Activated naive CD4-positive, alpha-beta T cell treated with anti-CD3 and anti-CD28 coated beads for 36 hours (primary cell): ENCODE measurements at regions of chr14 and their contacts with region 1.

Region 1: GRCh38 chr14:91872517-91873470 is 5.5 kb upstream of the TC2N start:
- DNase-seq: peak; percentile 53
- H3K4me3 Mint-ChIP-seq: peak overlapping the region; percentile 57
- H3K27ac Mint-ChIP-seq: peak overlapping the region; percentile 74
- H3K4me1 Mint-ChIP-seq: peaks cover 87% of the 10 kb centered on the region
- H3K27me3 Mint-ChIP-seq: no peaks in the 10 kb centered on the region

Region 2: GRCh38 chr14:91303091-91303923 is 569.5 kb before region 1 on chr14:
- CTCF ChIA-PET with region 1: no interaction called
- intact Hi-C with region 1: loop called (anchors 5 kb)
- DNase-seq: peak; percentile 89
- H3K4me3 Mint-ChIP-seq: no peak overlapping the region
- H3K27ac Mint-ChIP-seq: peak overlapping the region; percentile 93
- H3K4me1 Mint-ChIP-seq: peaks cover 58% of the 10 kb centered on the region
- H3K27me3 Mint-ChIP-seq: no peaks in the 10 kb centered on the region

Region 3: DNA sequence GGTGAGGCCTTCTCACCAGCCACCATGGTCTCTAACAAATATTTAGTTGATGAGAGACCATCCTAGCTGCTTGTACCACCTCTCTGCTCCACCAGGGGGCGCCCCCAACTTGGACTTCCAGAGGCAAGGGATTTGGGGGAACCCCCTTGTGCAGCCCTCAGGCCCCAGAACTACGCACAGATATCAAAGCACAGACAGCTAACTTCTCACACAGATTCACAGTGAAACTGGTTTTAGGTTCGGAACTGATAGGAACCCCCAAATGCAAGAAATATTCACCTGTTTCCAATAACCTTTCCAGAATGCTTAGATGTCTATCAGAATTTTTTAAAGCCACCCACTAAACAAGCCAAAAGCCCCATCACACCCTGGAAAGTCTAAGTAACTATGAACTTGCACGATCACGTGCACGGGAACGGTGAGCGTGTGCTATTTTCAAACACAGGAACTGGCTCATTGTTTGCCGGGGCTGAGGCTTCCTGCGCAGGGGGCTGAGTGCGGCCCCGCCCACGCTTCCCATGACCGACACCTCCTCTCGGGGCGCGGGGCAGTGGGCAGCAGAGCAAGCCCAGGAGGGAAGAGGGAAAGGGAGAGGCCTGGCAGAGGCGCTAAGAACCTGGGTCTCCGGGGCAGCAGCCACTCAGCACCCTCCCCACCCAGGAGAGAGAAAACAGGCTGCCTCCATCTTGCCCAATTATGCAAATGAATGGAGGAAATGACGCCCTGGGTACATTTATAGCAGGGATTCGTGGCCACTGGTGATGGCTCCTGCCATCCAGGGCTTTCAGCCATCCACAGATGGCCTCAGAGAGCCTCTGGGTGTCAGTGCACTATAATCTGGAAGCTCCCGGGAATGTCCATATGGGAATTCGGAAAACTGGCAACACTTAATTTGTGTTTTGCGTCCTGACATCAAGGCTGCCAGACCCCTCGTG is 548.9 kb before region 1 on chr14:
- CTCF ChIA-PET with region 1: no interaction called
- intact Hi-C with region 1: loop called (anchors 2 kb)
- DNase-seq: peak; percentile 99
- H3K4me3 Mint-ChIP-seq: peak overlapping the region; percentile 83
- H3K27ac Mint-ChIP-seq: peak overlapping the region; percentile 99
- H3K4me1 Mint-ChIP-seq: peaks cover 79% of the 10 kb centered on the region
- H3K27me3 Mint-ChIP-seq: no peaks in the 10 kb centered on the region

Region 4: DNA sequence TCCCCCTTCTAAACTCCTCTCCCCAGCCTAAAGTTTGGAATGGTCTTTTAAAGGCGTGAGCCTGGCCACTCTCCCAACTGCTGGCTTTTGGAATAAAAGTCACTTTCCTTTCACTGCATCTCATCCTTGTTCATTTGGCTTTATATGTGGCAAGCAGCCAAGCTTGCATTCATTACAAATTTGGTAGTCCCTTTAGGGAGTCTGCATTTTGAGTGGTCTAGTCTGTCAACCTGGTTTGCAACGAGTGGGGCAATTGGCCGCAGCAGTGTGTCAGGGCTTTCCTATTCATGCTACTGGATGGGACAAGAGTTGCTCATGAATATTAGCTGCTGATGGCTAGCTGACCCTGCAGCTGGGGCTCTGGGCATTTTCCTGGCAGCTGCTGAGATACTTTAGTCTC is 197.9 kb before region 1 on chr14:
- CTCF ChIA-PET with region 1: no interaction called
- intact Hi-C with region 1: no loop called
- DNase-seq: no peak
- H3K4me3 Mint-ChIP-seq: no peak overlapping the region
- H3K27ac Mint-ChIP-seq: no peak overlapping the region
- H3K4me1 Mint-ChIP-seq: no peaks in the 10 kb centered on the region
- H3K27me3 Mint-ChIP-seq: no peaks in the 10 kb centered on the region

Region 5: DNA sequence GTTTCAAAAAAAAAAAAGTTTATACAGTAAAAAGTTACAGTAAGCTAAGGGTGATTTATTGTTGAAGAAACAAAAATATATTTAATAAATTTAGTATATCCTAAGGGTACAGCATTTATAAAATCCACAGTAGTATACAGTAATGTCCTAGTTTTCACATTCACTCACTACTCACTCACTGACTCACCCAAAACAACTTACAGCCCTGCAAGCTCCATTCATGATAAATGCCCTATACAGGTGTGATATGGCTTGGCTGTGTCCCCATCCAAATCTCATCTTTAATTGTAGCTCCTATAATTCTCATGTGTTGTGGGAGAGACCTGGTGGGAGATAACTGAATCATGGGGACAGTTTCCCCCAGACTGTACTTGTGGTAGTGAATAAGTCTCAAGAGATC is 67.1 kb before region 1 on chr14:
- CTCF ChIA-PET with region 1: no interaction called
- intact Hi-C with region 1: no loop called
- DNase-seq: no peak
- H3K4me3 Mint-ChIP-seq: no peak overlapping the region
- H3K27ac Mint-ChIP-seq: no peak overlapping the region
- H3K4me1 Mint-ChIP-seq: peaks cover 13% of the 10 kb centered on the region
- H3K27me3 Mint-ChIP-seq: no peaks in the 10 kb centered on the region

Region 6: GRCh38 chr14:91836119-91836881 is 36.5 kb before region 1 on chr14:
- CTCF ChIA-PET with region 1: interaction called, 4 read pairs
- intact Hi-C with region 1: loop called (anchors 1 kb)
- DNase-seq: peak; percentile 92
- H3K4me3 Mint-ChIP-seq: peak overlapping the region; percentile 94
- H3K27ac Mint-ChIP-seq: peak overlapping the region; percentile 84
- H3K4me1 Mint-ChIP-seq: peaks cover 70% of the 10 kb centered on the region
- H3K27me3 Mint-ChIP-seq: no peaks in the 10 kb centered on the region

Region 7: DNA sequence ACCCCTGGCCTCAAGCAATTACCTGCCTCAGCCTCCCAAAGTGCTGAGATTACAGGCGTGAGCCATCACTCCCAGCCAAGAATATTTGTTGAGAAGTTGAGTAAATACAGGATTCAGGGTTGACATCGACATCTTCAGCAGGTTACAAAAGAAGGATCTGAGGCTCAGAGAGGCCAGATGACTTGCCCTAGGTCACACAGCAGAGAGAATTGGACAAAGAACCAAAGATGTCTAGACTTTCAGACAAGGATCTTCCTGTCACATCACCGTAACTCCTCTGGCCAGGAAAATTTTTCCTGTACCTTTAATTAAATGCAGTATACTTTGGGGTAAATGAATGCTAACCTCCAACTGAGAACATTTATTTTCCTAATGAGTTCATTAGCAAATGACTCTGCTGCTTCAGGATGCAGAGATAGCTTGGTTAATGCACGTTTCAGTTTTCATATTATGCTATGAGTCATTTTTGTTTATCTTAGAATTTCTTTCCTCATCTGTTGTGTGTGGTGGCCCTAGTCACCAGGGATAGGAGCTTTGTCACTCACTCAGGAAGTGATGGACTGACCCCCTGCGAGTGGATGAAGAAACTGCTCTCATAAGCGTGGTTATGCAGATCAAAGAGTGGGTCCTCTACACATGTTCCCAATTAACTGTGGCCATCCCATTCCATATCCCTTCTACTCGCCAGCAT is 14.4 kb before region 1 on chr14:
- CTCF ChIA-PET with region 1: interaction called, 12 read pairs
- intact Hi-C with region 1: loop called (anchors 2 kb)
- DNase-seq: peak; percentile 62
- H3K4me3 Mint-ChIP-seq: peak overlapping the region; percentile 37
- H3K27ac Mint-ChIP-seq: peak overlapping the region; percentile 75
- H3K4me1 Mint-ChIP-seq: peaks cover 86% of the 10 kb centered on the region
- H3K27me3 Mint-ChIP-seq: no peaks in the 10 kb centered on the region

Region 8: GRCh38 chr14:91893007-91893406 is 20.2 kb after region 1 on chr14:
- CTCF ChIA-PET with region 1: interaction called, 13 read pairs
- intact Hi-C with region 1: loop called (anchors 1 kb)
- DNase-seq: peak; percentile 62
- H3K4me3 Mint-ChIP-seq: no peak overlapping the region
- H3K27ac Mint-ChIP-seq: peak overlapping the region; percentile 92
- H3K4me1 Mint-ChIP-seq: peaks cover 56% of the 10 kb centered on the region
- H3K27me3 Mint-ChIP-seq: no peaks in the 10 kb centered on the region

Region 9: DNA sequence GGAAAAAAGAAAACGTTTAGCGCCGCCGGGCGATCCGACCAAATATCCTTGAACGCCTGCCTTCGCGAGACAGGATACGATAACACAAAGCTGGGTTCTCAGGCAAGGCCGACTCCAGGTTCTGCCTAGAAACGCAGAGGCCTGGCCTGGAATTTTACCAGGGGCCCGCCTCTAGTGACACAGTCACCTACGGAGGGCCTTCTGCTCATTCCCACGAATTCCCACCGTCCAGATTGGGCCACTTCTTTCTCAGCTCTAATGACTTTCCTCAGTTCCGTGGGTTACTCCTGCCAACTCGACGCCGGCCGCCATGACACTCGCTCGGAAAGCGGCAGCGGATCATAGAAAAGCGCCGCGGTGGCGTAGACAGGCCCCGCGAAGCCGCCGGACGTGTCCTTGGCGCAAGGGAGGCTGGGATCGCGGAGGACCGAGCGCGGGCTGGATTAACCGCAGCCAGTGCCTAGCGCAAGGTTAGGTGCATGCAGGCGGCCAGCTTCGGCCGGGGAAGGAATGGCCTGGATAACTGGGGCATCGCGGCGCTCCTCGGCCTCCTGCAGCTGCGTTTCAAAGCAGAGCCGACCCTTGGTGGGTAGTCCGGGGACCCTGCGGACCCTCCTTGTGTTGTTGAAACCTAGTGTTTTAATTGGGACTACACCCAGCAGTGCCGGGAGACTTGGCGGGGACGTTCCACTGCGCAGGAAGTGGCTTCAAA is 167.1 kb after region 1 on chr14 and contains the start of gene TRIP11:
- CTCF ChIA-PET with region 1: no interaction called
- intact Hi-C with region 1: loop called (anchors 5 kb)
- DNase-seq: peak; percentile 97
- H3K4me3 Mint-ChIP-seq: peak within 1 kb of the TSS; percentile 98
- H3K27ac Mint-ChIP-seq: peak within 1 kb of the TSS; percentile 98
- H3K4me1 Mint-ChIP-seq: peaks cover 32% of the 10 kb centered on the region
- H3K27me3 Mint-ChIP-seq: no peaks in the 10 kb centered on the region
- total RNA-seq, gene TRIP11: 22.7 to 26.1 TPM